Astrocyte of the cerebellum (primary cell): ENCODE measurements at regions of chr21 and their contacts with region 1.

Region 1: DNA sequence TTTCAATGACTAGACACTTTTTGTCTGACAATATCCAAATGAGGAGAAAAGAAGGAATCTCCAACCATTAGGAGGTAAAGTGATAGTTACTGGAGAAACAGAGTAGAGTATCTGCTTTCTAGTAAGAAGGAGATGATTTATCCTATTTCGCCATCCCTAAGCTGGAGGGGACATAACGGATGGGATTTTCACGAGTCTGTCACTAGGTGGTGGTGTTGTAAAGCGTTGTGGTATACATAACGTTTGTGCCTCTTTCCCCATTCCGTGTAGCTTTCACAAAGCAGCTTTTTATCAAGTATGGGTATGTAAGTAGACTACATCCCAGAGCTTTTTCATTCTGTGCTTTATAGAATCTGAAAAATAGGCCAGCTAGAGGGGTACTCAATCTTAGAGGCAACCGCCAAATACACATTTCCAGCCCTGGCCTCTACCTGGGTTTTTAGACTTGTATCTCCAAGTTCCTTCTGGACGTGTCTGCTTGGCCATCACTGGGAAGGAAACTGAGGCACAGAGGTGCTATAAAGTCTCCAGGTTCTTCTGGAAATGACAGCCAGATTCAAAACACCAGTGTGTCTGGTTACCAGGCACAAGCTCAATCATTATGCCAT is 33.3 kb upstream of the FAM3B start:
- DNase-seq: peak; percentile 85
- H3K4me3 ChIP-seq: no peak overlapping the region
- CTCF ChIP-seq: peak; percentile 79

Region 2: DNA sequence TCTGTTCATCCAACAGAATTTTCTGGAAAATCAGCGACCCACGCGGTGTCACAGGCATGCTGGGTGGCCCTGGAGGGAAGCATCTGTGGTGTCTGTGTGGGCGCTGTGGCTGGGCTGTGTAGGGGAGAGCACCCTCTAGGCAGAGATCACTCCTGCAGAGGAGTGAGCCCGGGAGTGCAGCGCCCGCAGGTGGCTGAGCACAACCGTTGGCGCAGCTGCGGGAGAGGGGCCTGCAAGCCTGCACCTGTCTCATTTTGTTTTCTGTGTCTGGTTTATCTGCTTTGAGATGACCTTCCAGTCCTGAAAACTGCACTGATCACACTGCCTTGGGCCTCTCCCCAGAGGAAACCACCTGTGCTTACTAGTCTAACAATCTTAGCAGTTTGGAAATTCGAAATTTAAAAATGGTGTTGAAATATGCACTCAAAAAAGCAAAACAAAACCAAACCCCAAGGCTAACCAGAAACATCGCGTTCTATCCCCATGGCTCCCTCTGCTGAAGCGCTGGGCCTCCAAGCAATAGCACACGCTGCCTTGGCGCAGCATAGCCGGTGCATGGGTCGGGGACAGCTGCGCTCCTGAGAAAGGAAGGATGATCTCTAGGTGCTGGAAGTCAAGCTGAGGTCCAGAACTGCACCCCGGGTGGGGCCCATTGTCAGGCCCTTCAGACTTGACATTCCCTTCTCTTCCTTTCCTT is 38.0 kb after region 1 on chr21:
- in situ Hi-C with region 1: no loop called
- DNase-seq: no peak
- H3K4me3 ChIP-seq: no peak overlapping the region
- CTCF ChIP-seq: no peak

Region 3: DNA sequence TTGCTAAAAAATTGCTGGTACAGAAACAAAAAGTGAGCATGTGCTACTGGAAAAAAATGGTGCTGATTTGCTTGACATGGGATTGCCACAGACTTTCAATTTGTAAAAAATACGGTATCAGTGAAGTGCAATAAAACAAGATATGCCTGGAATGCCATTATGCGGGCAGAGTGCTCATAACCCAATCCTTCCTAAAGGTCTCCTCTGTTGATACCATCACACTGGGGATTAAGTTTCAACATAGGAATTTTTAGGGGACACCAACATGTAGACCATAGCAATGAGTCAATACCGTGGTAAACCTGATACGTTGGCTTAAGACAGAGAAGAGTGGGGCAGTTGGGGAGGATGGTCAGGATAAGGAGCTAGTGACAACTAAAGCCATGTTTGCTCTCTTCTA is 163.3 kb after region 1 on chr21:
- in situ Hi-C with region 1: loop called (anchors 10 kb)
- DNase-seq: no peak
- H3K4me3 ChIP-seq: no peak overlapping the region
- CTCF ChIP-seq: no peak

Region 4: GRCh38 chr21:41777951-41778874 is 494.9 kb after region 1 on chr21:
- in situ Hi-C with region 1: loop called (anchors 25 kb)
- DNase-seq: peak; percentile 86
- H3K4me3 ChIP-seq: no peak overlapping the region
- CTCF ChIP-seq: peak; percentile 96